ENCODE measurements at regions of chr13 and their contacts with region 1.

Region 1: GRCh38 chr13:43878892-43879754 is at the start of gene CCDC122:
- DNase-seq: peak; percentile 84
- ATAC-seq: peak; percentile 88
- H3K4me3 ChIP-seq: peak within 1 kb of the TSS; percentile 81
- H3K27ac ChIP-seq: peak within 1 kb of the TSS; percentile 86
- H3K4me1 ChIP-seq: peaks cover 12% of the 10 kb centered on the region
- H3K27me3 ChIP-seq: no peaks in the 10 kb centered on the region
- CTCF ChIP-seq: no peak
- POLR2A ChIP-seq: peak; percentile 90
- RAD21 ChIP-seq: no peak
- total RNA-seq, gene CCDC122: 0.72 and 1.9 TPM in 2 replicates

Region 2: GRCh38 chr13:42497798-42498197 is 1381.3 kb before region 1 on chr13:
- CTCF ChIA-PET with region 1: no interaction called
- POLR2A ChIA-PET with region 1: no interaction called
- dilution Hi-C with region 1: no loop called
- in situ Hi-C with region 1: no loop called
- intact Hi-C with region 1: no loop called
- DNase-seq: peak; percentile 40
- ATAC-seq: no peak
- H3K4me3 ChIP-seq: no peak overlapping the region
- H3K27ac ChIP-seq: no peak overlapping the region
- H3K4me1 ChIP-seq: no peaks in the 10 kb centered on the region
- H3K27me3 ChIP-seq: peaks cover 7% of the 10 kb centered on the region
- CTCF ChIP-seq: no peak
- POLR2A ChIP-seq: no peak
- RAD21 ChIP-seq: no peak

Region 3: DNA sequence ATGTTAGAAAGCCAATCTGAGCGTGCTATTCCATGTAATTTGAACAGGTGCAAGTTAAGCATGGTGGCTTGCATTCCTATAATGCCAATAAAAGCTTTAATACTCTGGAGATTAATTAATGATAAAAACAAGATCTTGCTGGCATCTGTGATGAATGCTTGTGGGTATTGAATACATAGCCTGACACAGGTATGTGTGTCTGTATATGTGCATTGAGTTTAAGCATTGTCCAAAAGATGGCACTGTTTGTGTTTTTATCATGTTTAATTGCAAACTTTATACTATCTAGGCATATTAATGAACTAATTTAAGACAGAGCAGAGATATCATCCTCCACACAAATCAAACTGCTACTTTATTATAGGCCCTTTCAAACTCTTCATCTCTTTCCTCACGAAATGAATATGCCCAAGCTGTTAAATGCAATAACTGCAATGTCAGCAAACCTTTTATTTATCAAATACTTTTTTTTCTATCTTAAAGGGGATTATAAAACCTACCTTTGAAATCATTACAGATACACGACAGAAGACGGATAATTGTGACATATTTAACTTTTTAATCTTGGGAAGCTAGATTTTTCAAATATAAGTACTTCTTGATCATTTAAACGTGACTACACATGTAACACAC is 1218.7 kb before region 1 on chr13:
- CTCF ChIA-PET with region 1: no interaction called
- POLR2A ChIA-PET with region 1: no interaction called
- dilution Hi-C with region 1: no loop called
- in situ Hi-C with region 1: no loop called
- intact Hi-C with region 1: loop called (anchors 10 kb)
- DNase-seq: peak; percentile 27
- ATAC-seq: peak; percentile 65
- H3K4me3 ChIP-seq: no peak overlapping the region
- H3K27ac ChIP-seq: no peak overlapping the region
- H3K4me1 ChIP-seq: no peaks in the 10 kb centered on the region
- H3K27me3 ChIP-seq: peaks cover 31% of the 10 kb centered on the region
- CTCF ChIP-seq: peak; percentile 53
- POLR2A ChIP-seq: no peak
- RAD21 ChIP-seq: peak; percentile 60

Region 4: DNA sequence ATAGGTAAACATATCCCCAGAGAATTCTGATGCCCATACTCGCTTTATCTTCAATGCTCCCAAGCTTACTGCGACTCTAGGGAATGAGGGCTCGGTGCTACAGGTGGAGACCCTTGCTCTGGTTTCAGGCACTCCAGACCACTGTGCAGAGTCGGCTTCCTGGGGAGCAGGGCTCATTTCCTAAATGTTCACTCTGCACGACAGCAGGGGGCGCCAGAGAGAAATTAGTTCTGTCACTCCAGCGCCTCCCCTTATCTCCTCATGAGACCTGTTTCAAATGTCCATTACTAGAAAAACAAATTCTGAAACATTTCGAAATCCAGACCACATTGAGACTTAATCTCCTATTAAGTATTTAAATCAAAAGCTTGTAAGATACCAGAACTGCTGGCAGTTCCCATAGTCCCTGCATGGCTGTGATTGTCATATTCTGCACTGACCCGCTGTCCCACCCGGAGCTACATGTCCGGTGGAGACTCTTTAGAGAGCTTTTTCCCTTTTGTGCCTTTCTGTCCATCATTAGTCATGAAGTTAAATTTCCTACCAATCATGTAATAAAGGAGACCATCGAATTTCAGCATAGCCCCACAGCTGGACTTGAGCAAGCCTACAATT is 909.5 kb before region 1 on chr13:
- CTCF ChIA-PET with region 1: no interaction called
- POLR2A ChIA-PET with region 1: no interaction called
- dilution Hi-C with region 1: no loop called
- in situ Hi-C with region 1: no loop called
- intact Hi-C with region 1: loop called (anchors 10 kb)
- DNase-seq: peak; percentile 69
- ATAC-seq: peak; percentile 89
- H3K4me3 ChIP-seq: no peak overlapping the region
- H3K27ac ChIP-seq: no peak overlapping the region
- H3K4me1 ChIP-seq: peaks cover 12% of the 10 kb centered on the region
- H3K27me3 ChIP-seq: no peaks in the 10 kb centered on the region
- CTCF ChIP-seq: peak; percentile 77
- POLR2A ChIP-seq: no peak
- RAD21 ChIP-seq: peak; percentile 71

Region 5: DNA sequence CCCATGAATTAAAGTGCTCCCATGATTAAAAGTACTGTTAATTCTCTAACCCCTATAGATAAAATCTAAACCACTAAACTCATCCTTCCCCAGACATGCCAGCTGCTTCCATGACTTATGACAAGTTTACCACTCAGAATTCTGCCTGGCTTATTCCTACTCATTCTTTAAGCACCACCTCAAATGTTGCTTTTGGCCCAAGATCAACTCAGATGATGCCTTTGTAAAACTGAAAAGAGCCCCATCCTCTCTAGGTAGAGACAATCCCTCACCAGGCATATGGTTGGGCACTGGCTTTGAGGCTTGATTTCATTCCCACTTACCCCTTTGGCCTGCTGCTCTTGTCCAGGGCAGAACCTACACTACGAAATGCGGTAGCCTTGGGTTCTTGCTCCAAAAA is 605.8 kb before region 1 on chr13:
- CTCF ChIA-PET with region 1: no interaction called
- POLR2A ChIA-PET with region 1: no interaction called
- dilution Hi-C with region 1: no loop called
- in situ Hi-C with region 1: no loop called
- intact Hi-C with region 1: loop called (anchors 10 kb)
- DNase-seq: peak; percentile 59
- ATAC-seq: no peak
- H3K4me3 ChIP-seq: no peak overlapping the region
- H3K27ac ChIP-seq: no peak overlapping the region
- H3K4me1 ChIP-seq: peaks cover 26% of the 10 kb centered on the region
- H3K27me3 ChIP-seq: no peaks in the 10 kb centered on the region
- CTCF ChIP-seq: no peak
- POLR2A ChIP-seq: no peak
- RAD21 ChIP-seq: no peak

Region 6: GRCh38 chr13:43374621-43375020 is 504.5 kb before region 1 on chr13:
- CTCF ChIA-PET with region 1: no interaction called
- POLR2A ChIA-PET with region 1: no interaction called
- dilution Hi-C with region 1: no loop called
- in situ Hi-C with region 1: no loop called
- intact Hi-C with region 1: loop called (anchors 10 kb)
- DNase-seq: peak; percentile 64
- ATAC-seq: peak; percentile 81
- H3K4me3 ChIP-seq: no peak overlapping the region
- H3K27ac ChIP-seq: no peak overlapping the region
- H3K4me1 ChIP-seq: no peaks in the 10 kb centered on the region
- H3K27me3 ChIP-seq: no peaks in the 10 kb centered on the region; the same call in 1 of the 2 replicates
- CTCF ChIP-seq: no peak
- POLR2A ChIP-seq: no peak
- RAD21 ChIP-seq: no peak

Region 7: DNA sequence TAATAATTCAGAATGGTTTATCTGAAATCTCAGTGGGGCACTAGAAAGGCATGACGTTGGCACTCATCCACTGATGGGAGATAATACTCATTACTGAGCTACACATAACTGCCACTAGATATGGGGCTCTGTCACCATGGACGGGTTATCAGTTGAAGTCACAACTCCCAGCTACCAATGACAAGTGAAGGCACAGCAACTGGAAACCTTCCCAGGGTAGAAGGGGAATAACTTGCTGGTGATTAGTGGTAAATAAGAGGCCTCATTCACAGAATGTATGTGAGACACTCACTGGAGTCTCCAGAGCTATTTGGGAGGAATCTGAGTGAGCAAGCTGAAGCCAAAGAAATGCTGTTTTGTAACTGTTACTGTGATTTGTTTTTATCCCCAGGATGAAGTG is 342.0 kb before region 1 on chr13:
- CTCF ChIA-PET with region 1: no interaction called
- POLR2A ChIA-PET with region 1: no interaction called
- dilution Hi-C with region 1: no loop called
- in situ Hi-C with region 1: no loop called
- intact Hi-C with region 1: no loop called
- DNase-seq: peak; percentile 31
- ATAC-seq: peak; percentile 79
- H3K4me3 ChIP-seq: no peak overlapping the region
- H3K27ac ChIP-seq: no peak overlapping the region
- H3K4me1 ChIP-seq: no peaks in the 10 kb centered on the region; the same call in 1 of the 2 replicates
- H3K27me3 ChIP-seq: no peaks in the 10 kb centered on the region
- CTCF ChIP-seq: no peak
- POLR2A ChIP-seq: no peak
- RAD21 ChIP-seq: no peak

Region 8: DNA sequence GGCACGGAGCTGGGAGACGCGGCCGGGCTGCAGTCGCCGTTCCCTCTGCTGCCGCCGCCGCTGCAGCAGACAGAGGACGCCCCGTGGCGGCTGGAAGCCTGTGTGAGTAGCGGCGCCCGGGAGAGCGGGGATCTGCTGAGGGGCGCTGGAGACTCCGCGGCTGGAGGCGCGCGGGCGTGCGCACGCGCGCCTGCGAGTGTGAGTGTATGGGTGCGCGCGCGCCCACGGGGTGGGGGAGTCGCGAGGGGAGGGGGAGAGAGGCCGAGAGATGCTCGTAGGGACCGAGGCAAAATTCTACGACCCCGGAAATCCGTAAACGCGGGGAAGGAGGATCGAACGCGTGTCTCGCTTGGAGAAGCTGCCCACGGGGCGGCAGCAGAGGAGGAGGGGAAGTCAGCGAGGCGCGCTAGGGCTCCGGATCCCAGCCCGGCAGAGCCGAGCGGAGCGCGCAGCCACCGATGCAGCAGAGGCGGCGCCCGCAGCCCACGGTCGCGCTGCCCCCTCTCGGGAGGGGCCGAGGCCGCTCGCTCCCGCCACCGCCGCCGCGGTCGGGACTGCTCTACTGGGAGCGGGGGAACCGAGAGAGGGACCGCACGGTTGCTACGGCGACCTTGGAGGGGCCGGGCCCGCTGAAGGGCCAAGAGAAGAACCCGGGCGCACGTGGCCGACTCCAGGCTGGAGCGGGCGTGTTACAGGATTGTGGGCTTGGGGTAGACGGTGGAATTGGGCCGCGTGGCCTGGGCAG is 92.2 kb before region 1 on chr13 and contains the start of gene ENOX1:
- CTCF ChIA-PET with region 1: interaction called, 3 read pairs
- POLR2A ChIA-PET with region 1: no interaction called
- dilution Hi-C with region 1: no loop called
- in situ Hi-C with region 1: no loop called
- intact Hi-C with region 1: loop called (anchors 5 kb)
- DNase-seq: peak; percentile 74
- ATAC-seq: peak; percentile 79
- H3K4me3 ChIP-seq: peak within 1 kb of the TSS; percentile 52
- H3K27ac ChIP-seq: peak within 1 kb of the TSS; percentile 11
- H3K4me1 ChIP-seq: no peaks in the 10 kb centered on the region
- H3K27me3 ChIP-seq: no peaks in the 10 kb centered on the region; the same call in 1 of the 2 replicates
- CTCF ChIP-seq: peak; percentile 18; the same call in 1 of the 2 replicates
- POLR2A ChIP-seq: no peak
- RAD21 ChIP-seq: peak; percentile 36
- total RNA-seq, gene ENOX1: 1.3 and 1.9 TPM in 2 replicates